Transverse colon (tissue), 4 donors: ENCODE measurements at regions of chr12 and their contacts with region 1.

Region 1: GRCh38 chr12:54439521-54440255 is 20.6 kb upstream of the ITGA5 start:
- DNase-seq: no peak
- H3K4me3 ChIP-seq: no peak overlapping the region
- H3K27ac ChIP-seq: peak overlapping the region in 3 of 4 donors; percentile 11 to 39 (median 16)
- H3K4me1 ChIP-seq: peaks cover 4 to 30% (median 6%) of the 10 kb centered on the region in 4 donors
- H3K27me3 ChIP-seq: no peaks in the 10 kb centered on the region
- CTCF ChIP-seq: peak; percentile 71 to 87 (median 79)
- EP300 ChIP-seq: no peak
- POLR2A ChIP-seq: no peak

Region 2: GRCh38 chr12:54398995-54399793 is 40.5 kb before region 1 on chr12:
- in situ Hi-C with region 1: loop called in 3 of 4 experiments (anchors 5 kb)
- intact Hi-C with region 1: loop called (anchors 2 kb)
- DNase-seq: peak; percentile 85
- H3K4me3 ChIP-seq: no peak overlapping the region
- H3K27ac ChIP-seq: peak overlapping the region in 3 of 4 donors; percentile 9 to 47 (median 28)
- H3K4me1 ChIP-seq: no peaks in the 10 kb centered on the region
- H3K27me3 ChIP-seq: no peaks in the 10 kb centered on the region
- CTCF ChIP-seq: peak; percentile 94 to 97 (median 97)
- EP300 ChIP-seq: no peak
- POLR2A ChIP-seq: no peak

Region 3: GRCh38 chr12:54404061-54405004 is 35.4 kb before region 1 on chr12:
- in situ Hi-C with region 1: loop called in 3 of 4 experiments (anchors 5 kb)
- intact Hi-C with region 1: loop called (anchors 2 kb)
- DNase-seq: peak; percentile 65
- H3K4me3 ChIP-seq: no peak overlapping the region
- H3K27ac ChIP-seq: peak overlapping the region; percentile 25 to 40 (median 32)
- H3K4me1 ChIP-seq: no peaks in the 10 kb centered on the region
- H3K27me3 ChIP-seq: no peaks in the 10 kb centered on the region
- CTCF ChIP-seq: peak; percentile 89 to 99 (median 95)
- EP300 ChIP-seq: no peak
- POLR2A ChIP-seq: no peak